Activated naive CD4-positive, alpha-beta T cell treated with anti-CD3 and anti-CD28 coated beads for 36 hours (primary cell): ENCODE measurements at regions of chrX and their contacts with region 1.

Region 1: DNA sequence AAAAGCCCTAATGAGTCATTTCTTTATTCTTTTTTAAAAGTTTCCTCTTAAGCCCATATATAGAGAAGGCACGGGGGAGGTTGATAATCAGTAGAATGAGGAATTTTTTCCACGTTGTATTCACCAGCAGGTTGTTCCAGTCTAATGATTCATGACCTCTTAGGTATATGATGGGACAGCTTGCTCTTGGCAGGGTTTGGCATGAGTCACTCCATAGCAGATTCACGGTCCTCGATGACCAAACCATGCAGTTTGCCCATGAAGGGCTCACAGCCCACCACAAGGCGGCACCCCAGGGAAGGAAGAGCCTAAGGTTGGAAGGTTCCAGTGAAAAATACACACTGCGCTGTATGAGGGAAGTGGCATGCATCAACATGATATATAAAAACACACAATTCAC is 623.8 kb upstream of the DIPK2B start:
- DNase-seq: peak; percentile 61
- H3K4me3 Mint-ChIP-seq: no peak overlapping the region
- H3K27ac Mint-ChIP-seq: peak overlapping the region; percentile 87
- H3K4me1 Mint-ChIP-seq: peaks cover 52% of the 10 kb centered on the region
- H3K27me3 Mint-ChIP-seq: no peaks in the 10 kb centered on the region

Region 2: GRCh38 chrX:45134315-45134731 is 690.1 kb before region 1 on chrX:
- CTCF ChIA-PET with region 1: no interaction called
- intact Hi-C with region 1: no loop called
- DNase-seq: no peak
- H3K4me3 Mint-ChIP-seq: no peak overlapping the region
- H3K27ac Mint-ChIP-seq: no peak overlapping the region
- H3K4me1 Mint-ChIP-seq: no peaks in the 10 kb centered on the region
- H3K27me3 Mint-ChIP-seq: no peaks in the 10 kb centered on the region

Region 3: DNA sequence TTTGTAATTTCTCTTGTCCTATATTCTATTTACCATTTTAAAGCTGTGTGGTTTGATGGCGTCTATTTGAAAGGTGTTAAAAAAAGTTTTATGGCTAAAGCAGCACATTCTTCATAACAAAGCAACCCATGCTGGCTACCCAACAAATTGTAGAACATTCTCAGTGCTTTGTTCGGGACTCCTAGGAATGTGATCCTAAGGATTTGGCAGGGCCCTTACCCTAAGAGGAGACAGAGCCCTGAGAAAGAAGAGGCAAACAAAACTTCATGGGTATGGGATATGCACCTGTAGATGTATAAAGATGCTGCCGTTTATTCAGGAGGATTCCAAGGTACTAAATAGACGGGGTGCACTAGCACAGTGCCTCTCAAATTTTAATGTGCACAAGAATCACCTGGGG is 253.0 kb before region 1 on chrX:
- CTCF ChIA-PET with region 1: no interaction called
- intact Hi-C with region 1: no loop called
- DNase-seq: no peak
- H3K4me3 Mint-ChIP-seq: no peak overlapping the region
- H3K27ac Mint-ChIP-seq: no peak overlapping the region
- H3K4me1 Mint-ChIP-seq: no peaks in the 10 kb centered on the region
- H3K27me3 Mint-ChIP-seq: no peaks in the 10 kb centered on the region

Region 4: GRCh38 chrX:46029777-46030176 is 205.3 kb after region 1 on chrX:
- CTCF ChIA-PET with region 1: no interaction called
- intact Hi-C with region 1: no loop called
- DNase-seq: no peak
- H3K4me3 Mint-ChIP-seq: no peak overlapping the region
- H3K27ac Mint-ChIP-seq: no peak overlapping the region
- H3K4me1 Mint-ChIP-seq: no peaks in the 10 kb centered on the region
- H3K27me3 Mint-ChIP-seq: peaks cover 2% of the 10 kb centered on the region

Region 5: GRCh38 chrX:46279925-46280313 is 455.4 kb after region 1 on chrX:
- CTCF ChIA-PET with region 1: no interaction called
- intact Hi-C with region 1: loop called (anchors 10 kb)
- DNase-seq: no peak
- H3K4me3 Mint-ChIP-seq: no peak overlapping the region
- H3K27ac Mint-ChIP-seq: peak overlapping the region; percentile 72
- H3K4me1 Mint-ChIP-seq: peaks cover 24% of the 10 kb centered on the region
- H3K27me3 Mint-ChIP-seq: no peaks in the 10 kb centered on the region

Region 6: GRCh38 chrX:47080915-47081236 is 1256.4 kb after region 1 on chrX:
- CTCF ChIA-PET with region 1: no interaction called
- intact Hi-C with region 1: no loop called
- DNase-seq: no peak
- H3K4me3 Mint-ChIP-seq: no peak overlapping the region
- H3K27ac Mint-ChIP-seq: no peak overlapping the region
- H3K4me1 Mint-ChIP-seq: no peaks in the 10 kb centered on the region
- H3K27me3 Mint-ChIP-seq: no peaks in the 10 kb centered on the region